ENCODE measurements at regions of chr9 and their contacts with region 1.

Region 1: DNA sequence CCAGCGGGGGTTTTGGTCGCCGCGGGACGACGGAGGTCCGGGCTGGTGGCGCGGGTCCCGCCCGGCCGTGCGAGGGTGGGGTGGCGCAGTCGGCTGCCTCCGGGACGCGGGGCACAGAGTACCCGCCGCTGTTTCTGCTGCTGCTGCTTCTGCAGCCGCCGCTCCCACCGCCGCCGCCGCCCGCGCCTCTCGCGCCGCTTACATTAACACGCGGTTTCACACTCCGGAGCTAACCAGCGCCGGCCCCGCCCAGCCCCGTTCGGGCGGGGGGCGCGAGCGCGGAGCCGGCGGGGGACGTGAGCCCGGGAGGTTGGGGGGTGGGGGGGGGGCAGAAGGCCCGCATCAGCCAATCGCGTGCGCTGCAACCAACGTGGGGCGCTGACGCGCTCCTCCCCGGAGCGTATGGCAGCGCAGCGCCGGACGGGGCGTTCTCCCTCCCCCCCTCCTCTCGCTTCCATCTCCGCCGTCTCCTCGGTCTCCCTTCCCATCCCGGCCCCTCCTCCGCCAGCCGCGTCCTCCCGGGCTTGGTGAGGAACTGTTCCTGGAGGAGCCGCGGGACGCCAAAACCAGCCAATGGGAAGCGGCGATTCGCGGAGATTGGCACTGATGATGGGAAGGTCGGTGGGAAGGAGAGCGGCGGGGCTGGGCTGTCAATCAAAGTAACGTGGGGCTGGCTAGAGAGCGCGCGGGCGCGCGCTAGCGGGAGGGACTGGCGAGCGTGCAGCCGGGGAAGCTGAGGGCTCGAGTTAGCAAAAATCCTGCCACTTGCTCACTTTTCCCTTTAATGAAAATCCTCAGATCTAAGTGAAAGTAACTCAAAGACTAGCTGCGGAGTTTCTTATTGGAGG is at the start of gene TLE1:
- DNase-seq: peak; percentile 100
- H3K4me3 ChIP-seq: peak within 1 kb of the TSS; percentile 83 to 95 (median 86)
- H3K27ac ChIP-seq: peak within 1 kb of the TSS; percentile 94 to 96 (median 96)
- H3K4me1 ChIP-seq: peaks cover 0 to 32% (median 24%) of the 10 kb centered on the region in 4 donors
- H3K27me3 ChIP-seq: no peaks in the 10 kb centered on the region
- CTCF ChIP-seq: no peak
- EP300 ChIP-seq: peak in 2 of 4 donors; percentile 41 to 65
- POLR2A ChIP-seq: peak; percentile 62 to 66
- total RNA-seq, gene TLE1: 45.7 to 54.6 (median 50.6) TPM

Region 2: GRCh38 chr9:80605129-80605528 is 1084.4 kb before region 1 on chr9:
- intact Hi-C with region 1: loop called (anchors 5 kb)
- DNase-seq: no peak
- H3K4me3 ChIP-seq: no peak overlapping the region
- H3K27ac ChIP-seq: no peak overlapping the region
- H3K4me1 ChIP-seq: peaks cover 0 to 17% (median 8%) of the 10 kb centered on the region in 4 donors
- H3K27me3 ChIP-seq: no peaks in the 10 kb centered on the region
- CTCF ChIP-seq: peak; percentile 18 to 49 (median 29)
- EP300 ChIP-seq: no peak
- POLR2A ChIP-seq: no peak

Region 3: GRCh38 chr9:81083067-81083466 is 606.5 kb before region 1 on chr9:
- intact Hi-C with region 1: loop called (anchors 10 kb)
- DNase-seq: peak; percentile 63
- H3K4me3 ChIP-seq: no peak overlapping the region
- H3K27ac ChIP-seq: peak overlapping the region in 3 of 4 donors; percentile 13 to 45 (median 15)
- H3K4me1 ChIP-seq: peaks cover 0 to 26% (median 22%) of the 10 kb centered on the region in 4 donors
- H3K27me3 ChIP-seq: no peaks in the 10 kb centered on the region
- CTCF ChIP-seq: peak in 3 of 4 experiments; percentile 31 to 48 (median 33)
- EP300 ChIP-seq: no peak
- POLR2A ChIP-seq: no peak

Region 4: DNA sequence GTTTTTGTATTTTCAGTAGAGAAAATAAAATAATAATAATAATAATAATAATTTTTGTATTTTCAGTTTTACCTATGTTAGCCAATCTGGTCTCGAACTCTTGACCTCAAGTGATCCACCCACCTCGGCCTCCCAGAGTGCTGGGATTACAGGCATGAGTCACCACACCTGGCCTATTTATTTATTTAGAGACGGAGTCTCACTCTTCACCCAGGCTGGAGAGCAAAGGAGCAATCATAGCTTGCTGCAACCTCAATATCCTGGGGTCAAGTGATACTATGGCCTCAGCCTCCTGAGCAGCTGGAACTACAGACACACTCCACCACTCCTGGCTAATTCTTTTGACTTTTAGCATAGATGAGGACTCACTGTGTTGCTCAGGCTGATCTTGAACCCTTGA is 167.7 kb before region 1 on chr9:
- intact Hi-C with region 1: loop called (anchors 2 kb)
- DNase-seq: no peak
- H3K4me3 ChIP-seq: no peak overlapping the region
- H3K27ac ChIP-seq: no peak overlapping the region
- H3K4me1 ChIP-seq: peaks cover 0 to 8% (median 0%) of the 10 kb centered on the region in 4 donors
- H3K27me3 ChIP-seq: no peaks in the 10 kb centered on the region
- CTCF ChIP-seq: no peak
- EP300 ChIP-seq: no peak
- POLR2A ChIP-seq: no peak

Region 5: DNA sequence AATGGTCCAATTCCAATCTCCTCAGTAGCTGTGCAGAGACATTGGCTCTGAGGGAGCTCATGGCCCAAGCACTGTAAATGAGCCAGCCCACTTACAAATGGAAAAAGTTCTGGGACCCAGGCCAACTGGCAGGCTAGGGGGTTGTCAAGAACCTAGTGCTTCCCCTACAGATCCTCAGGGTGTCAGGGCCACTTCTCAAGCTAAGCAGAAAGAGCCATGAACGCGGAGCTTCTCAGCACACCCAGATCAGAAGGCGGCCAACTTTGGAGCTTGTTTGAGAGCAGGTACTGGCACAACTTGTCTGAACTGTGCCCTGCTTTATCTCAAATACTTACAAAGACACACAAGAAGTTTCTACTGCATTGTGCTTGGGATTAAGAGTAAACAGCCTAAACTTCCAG is 17.7 kb before region 1 on chr9:
- intact Hi-C with region 1: loop called (anchors 2 kb)
- DNase-seq: peak; percentile 99
- H3K4me3 ChIP-seq: no peak overlapping the region
- H3K27ac ChIP-seq: peak overlapping the region; percentile 56 to 79 (median 72)
- H3K4me1 ChIP-seq: peaks cover 0 to 51% (median 43%) of the 10 kb centered on the region in 4 donors
- H3K27me3 ChIP-seq: no peaks in the 10 kb centered on the region
- CTCF ChIP-seq: no peak
- EP300 ChIP-seq: peak; percentile 60 to 82 (median 63)
- POLR2A ChIP-seq: no peak

Region 6: GRCh38 chr9:82606492-82607382 is 917.2 kb after region 1 on chr9:
- intact Hi-C with region 1: loop called (anchors 5 kb)
- DNase-seq: peak; percentile 67
- H3K4me3 ChIP-seq: no peak overlapping the region
- H3K27ac ChIP-seq: peak overlapping the region in 2 of 4 donors; percentile 17 to 43
- H3K4me1 ChIP-seq: peaks cover 0 to 25% (median 19%) of the 10 kb centered on the region in 4 donors
- H3K27me3 ChIP-seq: no peaks in the 10 kb centered on the region
- CTCF ChIP-seq: peak; percentile 38 to 60 (median 52)
- EP300 ChIP-seq: no peak
- POLR2A ChIP-seq: no peak